ENCODE measurements at regions of chr1 and their contacts with region 1.

Region 1: GRCh38 chr1:37995751-37996345 is 6.0 kb upstream of the SF3A3 start:
- DNase-seq: peak; percentile 59
- H3K4me3 Mint-ChIP-seq: peak overlapping the region; percentile 45
- H3K27ac Mint-ChIP-seq: peak overlapping the region; percentile 66
- H3K4me1 Mint-ChIP-seq: peaks cover 31% of the 10 kb centered on the region
- H3K27me3 Mint-ChIP-seq: no peaks in the 10 kb centered on the region

Region 2: DNA sequence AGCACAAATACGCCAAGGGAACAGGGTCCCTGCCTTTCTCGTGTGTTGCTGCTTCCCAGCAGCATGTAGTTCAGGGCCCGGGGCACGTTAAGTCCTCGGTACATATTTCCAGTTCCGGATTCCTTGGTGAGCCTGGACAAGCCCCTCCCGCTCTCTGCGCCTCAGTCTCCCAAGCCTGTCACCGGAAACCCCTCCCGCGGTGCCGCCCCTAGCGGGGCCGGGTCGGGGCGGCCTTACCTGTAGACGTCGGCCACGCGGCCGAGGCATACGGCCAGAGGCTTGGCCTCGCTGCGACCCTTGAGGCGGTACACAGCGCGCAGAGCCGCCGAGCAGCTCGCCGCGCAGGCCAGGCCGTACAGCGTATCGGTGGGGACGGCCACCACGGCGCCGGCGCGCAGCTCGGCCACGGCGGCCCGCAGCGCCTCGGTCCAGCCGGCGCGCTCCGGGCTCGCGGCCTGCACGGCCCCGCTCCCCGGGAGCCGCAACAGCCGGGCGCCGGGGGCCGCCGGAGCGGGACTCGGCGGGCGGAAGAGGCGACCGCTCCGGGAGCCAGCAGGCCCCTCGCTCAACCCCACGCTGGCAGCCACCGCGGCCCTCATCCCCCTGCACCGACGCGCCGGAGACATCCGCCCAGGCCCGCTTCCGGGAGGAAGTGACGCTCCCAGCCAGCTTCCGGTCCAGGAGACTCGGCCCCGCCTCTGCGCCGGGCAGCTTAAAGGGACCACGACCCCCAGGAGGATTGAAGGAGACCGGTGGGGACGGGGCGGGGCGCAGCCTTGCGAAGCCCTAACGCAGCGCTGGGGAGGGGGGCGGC is 188.1 kb before region 1 on chr1 and contains the starts of genes C1orf122 and YRDC:
- CTCF ChIA-PET with region 1: interaction called, 10 read pairs
- POLR2A ChIA-PET with region 1: no interaction called
- intact Hi-C with region 1: loop called (anchors 5 kb)
- DNase-seq: peak; percentile 95
- H3K4me3 Mint-ChIP-seq: peak within 1 kb of the TSS; percentile 95
- H3K27ac Mint-ChIP-seq: peak within 1 kb of the TSS; percentile 96
- H3K4me1 Mint-ChIP-seq: peaks cover 40% of the 10 kb centered on the region
- H3K27me3 Mint-ChIP-seq: no peaks in the 10 kb centered on the region
- total RNA-seq, gene C1orf122: 18.1 to 19.7 TPM
- total RNA-seq, gene YRDC: 34.1 to 36.1 TPM

Region 3: DNA sequence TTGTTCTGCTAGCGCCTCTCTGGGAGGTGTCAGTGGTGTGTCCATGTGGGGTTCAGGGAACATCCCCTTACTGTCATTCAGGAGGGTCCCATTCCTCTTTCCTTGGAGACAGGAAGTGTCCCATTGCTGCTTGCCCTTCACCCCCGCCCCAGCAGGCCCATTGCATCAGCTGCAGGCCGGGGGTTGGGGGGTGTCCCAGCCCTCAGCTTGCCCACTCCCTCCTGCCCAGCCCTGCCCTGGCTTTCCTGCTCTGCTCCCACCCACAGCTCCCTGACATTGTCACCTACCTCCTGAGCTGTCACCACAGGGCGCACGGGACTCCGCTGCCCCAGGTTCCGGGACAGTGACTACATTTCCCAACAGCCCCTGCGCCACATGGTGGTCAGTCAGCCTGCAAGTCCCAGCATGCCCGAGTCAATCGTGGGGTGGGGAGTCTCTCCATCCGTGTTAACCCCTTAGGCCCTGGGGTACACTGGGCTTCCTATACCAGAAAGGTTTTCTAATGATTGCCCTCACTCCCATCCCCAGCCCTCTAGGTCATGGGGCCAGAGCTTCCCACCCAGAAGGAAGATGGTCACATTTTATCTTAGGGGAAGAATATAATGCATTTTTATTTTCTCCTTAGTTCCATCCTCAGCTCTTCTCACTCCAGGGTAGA is 49.0 kb before region 1 on chr1 and contains the start of gene INPP5B:
- CTCF ChIA-PET with region 1: no interaction called
- POLR2A ChIA-PET with region 1: no interaction called
- intact Hi-C with region 1: no loop called
- DNase-seq: peak; percentile 81
- H3K4me3 Mint-ChIP-seq: peak within 1 kb of the TSS; percentile 91
- H3K27ac Mint-ChIP-seq: peak within 1 kb of the TSS; percentile 92
- H3K4me1 Mint-ChIP-seq: peaks cover 9% of the 10 kb centered on the region
- H3K27me3 Mint-ChIP-seq: no peaks in the 10 kb centered on the region
- total RNA-seq, gene INPP5B: 24.3 to 24.4 TPM

Region 4: GRCh38 chr1:38012363-38013226 is 16.7 kb after region 1 on chr1 and contains the start of gene UTP11:
- CTCF ChIA-PET with region 1: interaction called, 28 read pairs
- POLR2A ChIA-PET with region 1: interaction called, 6 read pairs
- intact Hi-C with region 1: loop called (anchors 1 kb)
- DNase-seq: peak; percentile 95
- H3K4me3 Mint-ChIP-seq: peak within 1 kb of the TSS; percentile 98
- H3K27ac Mint-ChIP-seq: peak within 1 kb of the TSS; percentile 95
- H3K4me1 Mint-ChIP-seq: peaks cover 58% of the 10 kb centered on the region
- H3K27me3 Mint-ChIP-seq: no peaks in the 10 kb centered on the region
- total RNA-seq, gene UTP11: 51.2 to 52.3 TPM

Measured in activated CD4-positive, alpha-beta memory T cell treated with anti-CD3 and anti-CD28 coated beads for 36 hours (primary cell).